Heart left ventricle (tissue), 16 donors: ENCODE measurements at regions of chr6 and their contacts with region 1.

Region 1: DNA sequence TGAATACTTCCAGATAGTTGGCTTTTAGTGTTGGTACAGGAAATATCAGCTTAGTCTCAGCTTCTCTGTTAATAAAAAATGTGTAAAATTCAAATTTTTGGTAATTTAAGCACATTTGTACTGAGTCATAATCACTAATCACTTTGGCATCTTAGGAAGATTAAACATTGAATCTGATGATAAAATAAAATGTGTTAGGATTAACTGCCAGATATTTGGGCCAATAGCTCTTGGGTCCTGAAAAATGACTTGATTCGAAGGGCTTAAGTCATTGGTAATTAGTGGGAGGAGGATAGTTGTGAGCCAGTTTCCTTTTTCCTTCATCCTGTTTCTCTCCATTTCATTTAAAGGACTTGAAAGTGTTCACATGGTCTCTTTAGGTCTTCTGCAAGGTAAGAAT is 426.1 kb downstream of the RFPL4B start:
- DNase-seq: no peak
- ATAC-seq: no peak
- H3K4me3 ChIP-seq: no peak overlapping the region
- H3K27ac ChIP-seq: no peak overlapping the region
- H3K4me1 ChIP-seq: no peaks in the 10 kb centered on the region
- H3K27me3 ChIP-seq: no peaks in the 10 kb centered on the region
- CTCF ChIP-seq: no peak
- POLR2A ChIP-seq: no peak

Region 2: GRCh38 chr6:112710706-112711105 is 62.5 kb before region 1 on chr6:
- intact Hi-C with region 1: no loop called
- DNase-seq: no peak
- ATAC-seq: no peak
- H3K4me3 ChIP-seq: no peak overlapping the region
- H3K27ac ChIP-seq: no peak overlapping the region
- H3K4me1 ChIP-seq: no peaks in the 10 kb centered on the region
- H3K27me3 ChIP-seq: no peaks in the 10 kb centered on the region
- CTCF ChIP-seq: no peak
- POLR2A ChIP-seq: no peak

Region 3: DNA sequence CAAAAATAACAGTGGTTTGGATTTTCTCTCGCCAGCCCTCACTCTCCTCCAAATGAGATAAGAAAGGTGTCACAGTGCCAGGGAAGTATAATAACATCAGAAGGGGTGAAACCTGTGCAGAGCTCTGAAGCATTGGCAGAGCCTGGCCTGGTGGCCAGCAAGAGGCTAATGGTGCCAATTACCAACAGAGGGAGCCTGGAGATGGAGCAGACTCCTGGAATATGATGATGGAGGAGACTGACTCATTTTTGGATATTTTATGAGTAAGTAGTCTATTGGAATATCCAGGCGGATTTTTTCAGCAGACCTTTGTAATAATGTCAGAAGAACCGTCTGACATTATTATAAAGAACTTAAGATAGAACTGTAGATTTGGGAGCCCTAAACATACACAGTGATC is 641.3 kb after region 1 on chr6:
- intact Hi-C with region 1: loop called in 1 of 10 experiments (anchors 10 kb)
- DNase-seq: peak in 4 of 5 donors; percentile 19 to 42 (median 34)
- ATAC-seq: peak in 3 of 4 donors; percentile 70 to 84 (median 81)
- H3K4me3 ChIP-seq: no peak overlapping the region
- H3K27ac ChIP-seq: no peak overlapping the region
- H3K4me1 ChIP-seq: peaks cover 0 to 14% (median 0%) of the 10 kb centered on the region in 12 donors
- H3K27me3 ChIP-seq: no peaks in the 10 kb centered on the region
- CTCF ChIP-seq: peak; percentile 21 to 69 (median 53)
- POLR2A ChIP-seq: no peak